ENCODE measurements at regions of chr16 and their contacts with region 1.

Region 1: GRCh38 chr16:12699161-12699560 is 104.5 kb downstream of the CPPED1 start:
- DNase-seq: no peak
- ATAC-seq: no peak

Region 2: DNA sequence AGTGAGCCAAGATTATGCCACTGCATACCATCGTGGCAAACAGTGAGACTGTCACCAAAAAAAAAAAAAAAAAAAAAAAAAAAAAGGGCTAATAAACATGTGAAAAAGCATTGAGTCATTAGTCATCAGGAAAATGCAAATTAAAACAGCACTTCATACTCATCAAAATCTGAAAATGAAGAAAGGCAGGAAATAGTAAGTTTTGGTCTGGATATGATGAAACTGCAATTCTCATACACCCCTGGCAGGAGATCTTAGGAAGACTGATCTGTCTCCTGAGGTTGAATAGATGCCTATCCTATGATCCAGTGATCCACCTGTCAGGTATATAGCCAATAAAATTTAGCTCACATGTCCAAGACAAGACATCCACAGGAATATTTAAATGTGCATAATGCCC is 108.2 kb before region 1 on chr16:
- intact Hi-C with region 1: no loop called
- DNase-seq: no peak
- ATAC-seq: no peak

Region 3: DNA sequence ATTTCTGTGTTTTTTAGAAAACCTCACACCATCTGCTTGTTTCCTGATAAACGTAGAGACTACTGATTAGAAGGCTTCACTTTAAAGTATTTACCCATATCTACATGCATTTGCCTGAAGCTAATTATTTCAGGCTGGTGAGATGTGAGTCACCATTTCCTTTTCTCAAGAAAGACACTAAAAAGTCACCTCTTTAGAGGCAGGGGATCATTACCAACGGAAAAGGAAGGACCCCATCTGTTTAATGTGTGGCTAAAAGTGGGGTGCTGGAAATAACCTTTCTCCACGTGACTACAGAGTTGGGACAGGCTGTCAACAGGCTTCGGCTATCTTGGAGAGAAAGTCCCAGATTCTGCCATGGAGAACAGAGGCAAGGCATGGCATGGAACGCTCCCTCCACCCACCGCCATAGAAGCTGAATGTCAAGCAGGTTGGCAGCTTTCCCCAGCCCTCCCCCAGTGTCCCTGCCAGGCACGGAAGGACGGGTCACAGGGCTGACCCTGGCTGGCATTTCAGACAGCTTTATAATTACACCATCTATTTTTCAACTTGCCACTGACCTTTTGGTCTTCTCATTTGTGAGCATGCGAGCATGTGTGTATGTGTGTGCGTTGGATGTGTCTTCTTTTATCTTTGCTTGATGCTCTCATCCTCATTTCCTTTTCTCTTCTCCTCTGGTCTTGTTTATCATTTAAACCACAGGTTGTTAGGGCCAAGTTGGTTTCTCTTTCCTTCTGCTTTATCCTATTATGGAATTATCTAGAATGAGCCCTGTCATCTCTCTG is 52.5 kb before region 1 on chr16:
- intact Hi-C with region 1: no loop called
- DNase-seq: no peak
- ATAC-seq: no peak

Region 4: DNA sequence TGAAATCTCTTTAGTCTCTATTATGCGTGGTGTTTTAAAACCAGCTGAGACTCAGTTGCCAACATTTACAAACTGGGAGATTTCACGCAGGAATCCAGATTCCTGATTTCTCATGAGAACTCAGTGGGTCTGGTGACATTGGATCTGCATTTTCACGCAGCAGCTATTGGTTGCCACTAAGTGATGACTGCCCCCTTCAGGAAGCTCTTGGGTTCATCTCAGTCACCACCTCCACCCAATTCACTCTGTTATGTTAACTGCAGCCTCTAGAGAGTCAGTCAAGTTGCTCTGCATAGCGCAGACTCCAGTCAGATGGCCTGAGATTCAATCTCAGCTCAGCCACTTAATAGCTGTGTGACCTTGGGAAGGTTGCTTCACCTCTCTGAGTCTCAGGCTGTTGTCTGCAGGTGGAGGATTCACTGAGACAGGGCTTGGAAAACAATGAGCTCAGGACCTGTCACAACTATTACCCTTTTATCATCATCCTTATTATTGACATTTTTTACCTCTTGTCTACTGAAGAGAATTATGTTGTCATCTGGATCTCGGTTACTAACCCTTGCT is 208.6 kb after region 1 on chr16:
- intact Hi-C with region 1: loop called (anchors 10 kb)
- DNase-seq: no peak
- ATAC-seq: no peak